Heart right ventricle (tissue), 16 donors: ENCODE measurements at regions of chr3 and their contacts with region 1.

Region 1: GRCh38 chr3:28155631-28156030 is 85.8 kb upstream of the CMC1 start:
- DNase-seq: no peak
- ATAC-seq: no peak
- H3K4me3 ChIP-seq: no peak overlapping the region
- H3K27ac ChIP-seq: no peak overlapping the region
- H3K4me1 ChIP-seq: peaks cover 0 to 18% (median 9%) of the 10 kb centered on the region in 9 donors
- H3K27me3 ChIP-seq: no peaks in the 10 kb centered on the region
- CTCF ChIP-seq: no peak

Region 2: DNA sequence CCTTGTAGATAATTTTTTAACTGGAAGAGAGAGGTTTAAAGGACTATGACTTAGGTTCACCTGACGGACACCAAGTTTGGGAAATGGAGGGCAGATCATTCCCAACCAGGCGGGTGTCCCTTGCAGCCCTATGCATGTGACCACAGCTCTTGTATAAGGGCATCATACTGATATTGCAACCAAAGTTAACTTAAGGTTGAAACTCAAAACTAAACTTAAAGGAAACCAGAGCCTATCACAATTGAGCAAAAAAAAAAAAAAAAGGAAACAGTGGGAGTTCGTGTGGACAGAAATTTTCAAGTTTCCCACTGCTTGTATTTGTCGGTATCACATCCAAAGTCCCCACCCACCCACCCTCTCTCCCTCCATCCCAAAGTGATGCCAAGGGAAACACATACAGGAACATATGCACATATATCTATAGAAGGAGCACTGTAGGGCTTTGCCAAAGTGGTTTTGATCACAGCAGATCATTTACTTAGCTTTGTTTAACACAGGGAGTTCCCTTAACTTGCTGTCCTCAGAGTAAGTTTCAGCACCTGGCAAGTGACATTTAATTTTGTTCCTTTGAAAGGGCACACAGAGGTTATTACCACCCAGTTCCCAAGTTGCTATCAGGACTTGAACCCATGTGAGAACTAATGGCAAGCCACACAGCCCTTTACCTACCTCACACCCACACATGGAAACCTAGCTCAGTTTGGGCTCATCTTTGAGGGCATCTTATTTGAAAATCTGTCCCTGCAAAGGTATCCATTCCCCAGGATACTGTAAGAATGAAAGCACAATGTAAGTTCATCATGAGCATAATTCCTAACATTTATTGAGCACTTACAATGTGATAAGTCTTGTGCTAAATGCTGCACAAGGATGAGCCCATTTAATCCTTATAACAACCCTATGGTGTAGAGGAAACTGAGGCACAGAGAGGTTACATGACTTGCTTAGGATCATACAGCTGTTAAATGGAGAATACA is 118.7 kb before region 1 on chr3:
- intact Hi-C with region 1: no loop called
- DNase-seq: no peak
- ATAC-seq: no peak
- H3K4me3 ChIP-seq: no peak overlapping the region
- H3K27ac ChIP-seq: no peak overlapping the region
- H3K4me1 ChIP-seq: no peaks in the 10 kb centered on the region
- H3K27me3 ChIP-seq: no peaks in the 10 kb centered on the region
- CTCF ChIP-seq: no peak

Region 3: DNA sequence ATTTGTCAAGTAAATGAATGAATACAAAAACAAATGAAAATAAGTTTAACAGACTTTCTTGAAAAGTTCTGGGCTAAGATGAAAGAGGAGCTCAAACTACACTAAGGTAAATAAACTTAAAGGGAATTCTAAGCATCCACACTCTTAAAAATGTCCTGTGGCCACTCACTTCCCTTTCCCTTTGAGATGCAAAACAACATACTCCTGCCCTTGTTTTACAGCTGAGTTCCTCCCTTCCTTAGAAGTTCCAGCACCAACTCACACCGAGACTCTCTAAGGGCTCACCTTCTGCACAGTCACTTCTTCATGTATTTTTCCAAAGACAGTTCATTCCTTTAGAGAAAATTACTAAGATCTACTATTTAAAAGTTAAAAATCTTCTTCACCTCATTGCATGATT is 37.5 kb before region 1 on chr3:
- intact Hi-C with region 1: loop called in 1 of 10 experiments (anchors 2 kb)
- DNase-seq: no peak
- ATAC-seq: no peak
- H3K4me3 ChIP-seq: no peak overlapping the region
- H3K27ac ChIP-seq: no peak overlapping the region
- H3K4me1 ChIP-seq: peaks cover 0 to 8% (median 0%) of the 10 kb centered on the region in 9 donors
- H3K27me3 ChIP-seq: no peaks in the 10 kb centered on the region
- CTCF ChIP-seq: no peak